Posterior vena cava (tissue), 2 donors: ENCODE measurements at regions of chr5 and their contacts with region 1.

Region 1: GRCh38 chr5:165735388-165735787 is 2230.0 kb downstream of the MAT2B start:
- DNase-seq: no peak

Region 2: DNA sequence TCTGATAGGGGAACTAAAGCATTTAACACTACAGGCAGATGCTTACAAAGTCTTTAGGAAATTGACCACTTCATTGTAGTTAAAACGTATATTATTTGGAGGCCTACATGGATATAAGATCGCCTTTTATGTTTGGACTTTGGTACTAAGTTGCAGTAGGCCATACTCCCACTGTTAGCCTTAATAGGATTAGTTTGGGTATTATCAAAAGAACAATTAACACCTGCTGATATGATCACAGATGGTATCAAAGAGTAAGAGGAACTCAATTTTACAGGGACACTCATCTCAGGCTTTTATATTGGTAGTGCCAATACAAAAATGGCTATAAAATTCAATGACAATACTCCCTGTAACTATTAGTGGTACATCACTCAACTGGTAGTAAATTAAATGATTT is 1047.0 kb before region 1 on chr5:
- intact Hi-C with region 1: no loop called
- DNase-seq: no peak

Region 3: GRCh38 chr5:165705960-165706359 is 29.4 kb before region 1 on chr5:
- intact Hi-C with region 1: loop called in 1 of 2 experiments (anchors 1 kb)
- DNase-seq: no peak